ENCODE measurements at regions of chr18 and their contacts with region 1.

Region 1: GRCh38 chr18:45879681-45880655 is 54.5 kb downstream of the SIGLEC15 start:
- DNase-seq: peak; percentile 23
- ATAC-seq: peak; percentile 99
- H3K4me3 ChIP-seq: no peak overlapping the region
- H3K27ac ChIP-seq: no peak overlapping the region
- H3K4me1 ChIP-seq: no peaks in the 10 kb centered on the region
- H3K27me3 ChIP-seq: no peaks in the 10 kb centered on the region
- CTCF ChIP-seq: peak; percentile 80 to 99 (median 99)
- POLR2A ChIP-seq: no peak
- RAD21 ChIP-seq: peak; percentile 80

Region 2: GRCh38 chr18:45690975-45691815 is 188.8 kb before region 1 on chr18:
- CTCF ChIA-PET with region 1: interaction called, 6 read pairs
- POLR2A ChIA-PET with region 1: no interaction called
- RAD21 ChIA-PET with region 1: no interaction called
- intact Hi-C with region 1: loop called (anchors 1 kb)
- DNase-seq: peak; percentile 62
- ATAC-seq: peak; percentile 98
- H3K4me3 ChIP-seq: no peak overlapping the region
- H3K27ac ChIP-seq: no peak overlapping the region
- H3K4me1 ChIP-seq: peaks cover 0 to 5% of the 10 kb centered on the region in 2 experiments; a peak in 1 of 4 replicates
- H3K27me3 ChIP-seq: no peaks in the 10 kb centered on the region
- CTCF ChIP-seq: peak; percentile 79 to 91 (median 84)
- POLR2A ChIP-seq: no peak
- RAD21 ChIP-seq: peak; percentile 93

Region 3: DNA sequence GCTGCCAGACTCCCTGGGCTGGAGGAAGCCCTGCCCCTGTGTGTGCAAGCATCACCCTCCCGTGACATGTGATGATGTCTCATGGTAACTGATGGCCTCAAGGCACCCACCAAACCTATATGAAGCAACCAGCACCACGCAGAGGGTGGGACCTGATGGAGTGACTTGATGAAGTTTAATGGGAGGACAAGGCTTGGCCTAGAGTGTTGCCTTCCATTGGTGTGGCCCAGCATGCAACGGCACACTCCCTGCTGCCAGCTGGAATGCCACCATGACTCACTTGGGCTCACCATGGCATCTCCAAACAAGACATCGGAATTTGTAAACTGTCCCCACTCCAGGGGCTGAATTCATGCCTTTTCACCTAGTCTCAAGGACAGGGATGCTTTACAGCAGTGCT is 164.6 kb before region 1 on chr18:
- CTCF ChIA-PET with region 1: interaction called, 4 read pairs
- POLR2A ChIA-PET with region 1: no interaction called
- RAD21 ChIA-PET with region 1: no interaction called
- intact Hi-C with region 1: loop called (anchors 2 kb)
- DNase-seq: no peak
- ATAC-seq: no peak
- H3K4me3 ChIP-seq: no peak overlapping the region
- H3K27ac ChIP-seq: no peak overlapping the region
- H3K4me1 ChIP-seq: no peaks in the 10 kb centered on the region
- H3K27me3 ChIP-seq: no peaks in the 10 kb centered on the region
- CTCF ChIP-seq: no peak
- POLR2A ChIP-seq: no peak
- RAD21 ChIP-seq: no peak

Region 4: GRCh38 chr18:45722899-45723298 is 157.1 kb before region 1 on chr18:
- CTCF ChIA-PET with region 1: interaction called, 56 read pairs
- POLR2A ChIA-PET with region 1: no interaction called
- RAD21 ChIA-PET with region 1: interaction called in 1 of 2 experiments, 5 read pairs
- intact Hi-C with region 1: loop called (anchors 1 kb)
- DNase-seq: peak; percentile 57
- ATAC-seq: peak; percentile 100
- H3K4me3 ChIP-seq: no peak overlapping the region
- H3K27ac ChIP-seq: no peak overlapping the region
- H3K4me1 ChIP-seq: no peaks in the 10 kb centered on the region
- H3K27me3 ChIP-seq: 0 out of 2 replicates have a peak, but pooled peaks cover 6% of the 10 kb centered on the region
- CTCF ChIP-seq: peak; percentile 74 to 94 (median 78)
- POLR2A ChIP-seq: no peak
- RAD21 ChIP-seq: peak; percentile 82

Region 5: GRCh38 chr18:45802608-45803492 is 77.1 kb before region 1 on chr18:
- CTCF ChIA-PET with region 1: no interaction called
- POLR2A ChIA-PET with region 1: no interaction called
- RAD21 ChIA-PET with region 1: no interaction called
- intact Hi-C with region 1: no loop called
- DNase-seq: peak; percentile 93
- ATAC-seq: peak; percentile 90
- H3K4me3 ChIP-seq: peak overlapping the region; percentile 15 to 50
- H3K27ac ChIP-seq: peak overlapping the region; percentile 86
- H3K4me1 ChIP-seq: peaks cover 14 to 59% of the 10 kb centered on the region in 2 experiments; a peak in 3 of 4 replicates
- H3K27me3 ChIP-seq: no peaks in the 10 kb centered on the region
- CTCF ChIP-seq: no peak
- POLR2A ChIP-seq: no peak
- RAD21 ChIP-seq: 0 out of 2 replicates have a peak, but pooled peaks have one; percentile 18

Region 6: GRCh38 chr18:45910405-45911023 is 30.5 kb after region 1 on chr18:
- CTCF ChIA-PET with region 1: interaction called, 9 read pairs
- POLR2A ChIA-PET with region 1: no interaction called
- RAD21 ChIA-PET with region 1: no interaction called
- intact Hi-C with region 1: loop called (anchors 1 kb)
- DNase-seq: peak; percentile 36
- ATAC-seq: peak; percentile 98
- H3K4me3 ChIP-seq: no peak overlapping the region
- H3K27ac ChIP-seq: no peak overlapping the region
- H3K4me1 ChIP-seq: no peaks in the 10 kb centered on the region
- H3K27me3 ChIP-seq: no peaks in the 10 kb centered on the region
- CTCF ChIP-seq: peak; percentile 65 to 96 (median 91)
- POLR2A ChIP-seq: no peak
- RAD21 ChIP-seq: peak; percentile 76

Region 7: DNA sequence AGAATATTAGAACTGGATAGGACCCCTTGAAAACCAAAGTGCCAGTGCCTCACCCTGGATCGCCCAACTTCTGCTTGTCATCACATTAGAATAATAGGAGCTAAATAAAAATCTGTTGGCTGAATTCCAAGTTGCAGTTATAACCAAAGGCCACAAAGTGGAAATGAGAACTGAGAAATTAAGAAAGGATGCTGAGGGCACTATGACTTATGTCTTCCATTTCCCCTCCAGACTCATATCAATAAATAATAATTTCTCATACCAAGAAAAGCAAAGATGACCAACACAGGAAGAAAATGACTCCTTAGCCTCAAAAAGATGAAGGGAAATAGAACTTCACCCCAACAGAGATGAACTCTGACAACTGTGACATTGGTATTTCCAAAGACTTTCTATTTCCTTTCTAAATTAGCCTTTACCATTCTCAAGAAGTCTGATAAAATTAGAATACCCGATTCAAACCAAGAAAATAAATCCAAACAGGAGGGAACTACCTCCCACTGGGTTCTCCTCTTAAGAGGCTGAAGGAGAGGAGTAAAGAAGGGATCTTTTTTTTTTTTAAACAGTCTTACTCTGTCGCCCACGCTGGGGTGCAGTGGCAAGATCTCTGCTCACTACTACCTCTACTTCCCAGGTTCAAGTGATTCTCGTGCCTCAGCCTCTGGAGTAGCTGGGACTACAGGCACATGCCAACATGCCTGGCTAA is 133.7 kb after region 1 on chr18:
- CTCF ChIA-PET with region 1: no interaction called
- POLR2A ChIA-PET with region 1: no interaction called
- RAD21 ChIA-PET with region 1: no interaction called
- intact Hi-C with region 1: no loop called
- DNase-seq: no peak
- ATAC-seq: no peak
- H3K4me3 ChIP-seq: no peak overlapping the region
- H3K27ac ChIP-seq: no peak overlapping the region
- H3K4me1 ChIP-seq: no peaks in the 10 kb centered on the region
- H3K27me3 ChIP-seq: no peaks in the 10 kb centered on the region
- CTCF ChIP-seq: no peak
- POLR2A ChIP-seq: no peak
- RAD21 ChIP-seq: no peak

Measured in HCT116 (cell line).